H1 (cell line): ENCODE measurements at regions of chr11 and their contacts with region 1.

Region 1: GRCh38 chr11:113862435-113862834 is 12.9 kb downstream of the USP28 start:
- DNase-seq: no peak
- H3K4me3 ChIP-seq: no peak overlapping the region; a peak in 1 of 8 replicates
- H3K27ac ChIP-seq: no peak overlapping the region; the same call in 1 of the 2 replicates
- H3K4me1 ChIP-seq: peaks cover 4 to 16% (median 10%) of the 10 kb centered on the region in 4 experiments; a peak in 5 of 7 replicates
- H3K27me3 ChIP-seq: no peaks in the 10 kb centered on the region
- CTCF ChIP-seq: no peak
- EP300 ChIP-seq: no peak
- POLR2A ChIP-seq: no peak
- RAD21 ChIP-seq: no peak

Region 2: GRCh38 chr11:113849713-113850112 is 12.7 kb before region 1 on chr11:
- CTCF ChIA-PET with region 1: interaction called, 6 read pairs
- POLR2A ChIA-PET with region 1: interaction called, 23 read pairs
- DNase-seq: peak; percentile 60 to 73
- H3K4me3 ChIP-seq: peak overlapping the region in 1 of 4 experiments; percentile 14; a peak in 1 of 8 replicates
- H3K27ac ChIP-seq: peak overlapping the region; percentile 72; the same call in 1 of the 2 replicates
- H3K4me1 ChIP-seq: peaks cover 12 to 31% (median 24%) of the 10 kb centered on the region in 4 experiments
- H3K27me3 ChIP-seq: no peaks in the 10 kb centered on the region
- CTCF ChIP-seq: no peak
- EP300 ChIP-seq: peak in 1 of 2 experiments; percentile 93; a peak in 2 of 3 replicates
- POLR2A ChIP-seq: peak in 1 of 2 experiments; percentile 50; a peak in 1 of 3 replicates
- RAD21 ChIP-seq: no peak

Region 3: DNA sequence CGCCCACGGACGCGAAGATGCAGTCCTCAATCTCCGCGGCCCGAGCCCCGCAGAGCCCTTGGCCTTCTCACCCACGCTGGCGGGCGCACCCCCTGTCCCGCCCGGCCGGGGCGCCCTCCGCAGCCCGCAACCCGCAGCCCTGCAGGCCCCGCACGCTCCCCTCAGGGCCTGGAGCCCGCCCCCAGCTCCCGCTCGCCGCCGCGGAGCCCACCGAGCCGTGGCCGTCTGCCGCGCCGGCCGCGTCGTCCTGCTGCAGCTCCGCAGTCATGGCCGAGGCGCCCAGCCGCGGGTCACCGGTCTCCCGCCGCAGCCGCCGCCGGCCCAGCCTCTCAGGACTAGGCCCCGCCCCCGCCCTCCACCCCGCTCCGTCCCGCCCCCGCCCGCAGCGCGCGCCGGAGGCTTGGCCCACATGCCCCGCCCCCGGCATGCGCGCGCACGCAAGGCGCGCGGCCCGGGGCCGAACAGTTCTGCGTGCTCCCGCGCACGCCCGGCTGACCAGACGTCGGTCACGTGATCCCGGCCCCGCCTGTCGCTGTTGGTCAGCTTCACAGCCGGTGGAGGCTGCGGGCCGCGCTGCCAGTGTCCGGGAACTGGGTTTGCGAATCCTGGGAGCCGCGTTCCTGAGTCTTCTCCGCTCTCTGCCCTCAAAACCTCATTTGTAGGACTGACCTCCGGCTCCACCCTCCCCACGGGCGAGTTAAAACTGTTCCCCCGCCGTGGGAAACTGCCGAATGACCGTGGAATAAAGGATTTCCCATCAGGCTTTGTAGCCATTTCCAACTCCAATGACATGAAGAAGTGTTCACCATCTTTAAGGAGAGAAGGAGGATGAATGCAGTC is 13.0 kb after region 1 on chr11 and contains the start of gene USP28:
- CTCF ChIA-PET with region 1: interaction called, 3 read pairs
- POLR2A ChIA-PET with region 1: interaction called, 91 read pairs
- DNase-seq: peak; percentile 84 to 96
- H3K4me3 ChIP-seq: peak within 1 kb of the TSS; percentile 78 to 100 (median 90)
- H3K27ac ChIP-seq: peak within 1 kb of the TSS; percentile 83; the same call in 1 of the 2 replicates
- H3K4me1 ChIP-seq: peaks cover 4 to 8% (median 7%) of the 10 kb centered on the region in 4 experiments; a peak in 4 of 7 replicates
- H3K27me3 ChIP-seq: no peaks in the 10 kb centered on the region
- CTCF ChIP-seq: no peak
- EP300 ChIP-seq: no peak; a peak in 1 of 3 replicates
- POLR2A ChIP-seq: peak; percentile 64 to 95
- RAD21 ChIP-seq: no peak
- total RNA-seq, gene USP28: 110 and 119 TPM in 2 replicates

Region 4: GRCh38 chr11:113926273-113927197 is 64.1 kb after region 1 on chr11:
- CTCF ChIA-PET with region 1: no interaction called
- POLR2A ChIA-PET with region 1: no interaction called
- DNase-seq: no peak
- H3K4me3 ChIP-seq: no peak overlapping the region
- H3K27ac ChIP-seq: no peak overlapping the region
- H3K4me1 ChIP-seq: no peaks in the 10 kb centered on the region
- H3K27me3 ChIP-seq: no peaks in the 10 kb centered on the region
- CTCF ChIP-seq: no peak
- EP300 ChIP-seq: no peak
- POLR2A ChIP-seq: no peak
- RAD21 ChIP-seq: no peak

Region 5: GRCh38 chr11:113952588-113952987 is 90.2 kb after region 1 on chr11:
- CTCF ChIA-PET with region 1: no interaction called
- POLR2A ChIA-PET with region 1: no interaction called
- DNase-seq: no peak
- H3K4me3 ChIP-seq: no peak overlapping the region
- H3K27ac ChIP-seq: no peak overlapping the region
- H3K4me1 ChIP-seq: peaks cover 2 to 11% (median 6%) of the 10 kb centered on the region in 4 experiments
- H3K27me3 ChIP-seq: peaks cover 0 to 2% (median 0%) of the 10 kb centered on the region in 4 experiments; a peak in 2 of 7 replicates
- CTCF ChIP-seq: no peak
- EP300 ChIP-seq: no peak
- POLR2A ChIP-seq: no peak
- RAD21 ChIP-seq: no peak